ENCODE measurements at regions of chr2 and their contacts with region 1.

Region 1: DNA sequence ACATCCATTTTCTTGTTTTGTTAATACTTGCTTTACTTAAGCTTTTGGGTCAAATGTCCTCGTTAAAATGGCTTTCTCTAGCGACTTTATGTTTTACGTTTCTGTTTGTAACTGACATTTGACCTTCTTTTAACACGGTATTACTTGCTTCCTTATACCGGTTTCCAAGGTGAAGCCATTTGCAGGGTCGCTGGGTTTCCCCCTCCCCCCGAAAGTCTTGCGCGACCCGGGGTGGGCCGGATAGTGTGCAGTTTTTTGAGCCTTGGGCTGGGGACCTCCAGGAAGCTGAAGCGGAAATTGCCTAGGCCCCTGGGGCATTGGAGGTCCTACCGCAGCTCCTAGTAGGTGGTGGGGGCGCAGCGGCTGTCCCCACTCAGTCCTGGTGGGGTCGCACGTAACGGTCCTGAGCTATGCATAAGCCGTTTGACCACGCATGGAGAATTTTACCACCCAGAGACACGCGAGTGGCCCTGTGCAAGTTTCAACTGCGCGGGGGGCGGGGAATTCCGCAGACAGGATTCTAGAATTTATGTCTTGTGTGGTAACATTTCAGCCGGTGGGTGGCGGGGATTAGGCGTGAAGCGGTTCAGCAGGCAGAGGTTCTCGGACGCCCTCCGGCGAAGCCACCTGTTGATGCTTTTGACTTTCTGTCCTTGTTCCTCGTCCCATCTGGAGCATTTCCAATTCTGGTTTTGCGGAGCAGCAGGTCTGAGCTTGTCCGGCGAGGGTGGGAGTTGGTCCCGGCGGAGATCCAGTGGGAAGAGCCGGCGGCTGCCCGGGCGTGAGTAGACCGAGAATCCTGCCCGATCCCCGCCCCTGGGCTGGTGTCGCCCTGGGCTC is 2.4 kb downstream of the CFLAR start:
- DNase-seq: peak; percentile 82
- ATAC-seq: peak; percentile 28
- H3K4me3 Mint-ChIP-seq: peak overlapping the region; percentile 89
- H3K27ac Mint-ChIP-seq: peak overlapping the region; percentile 99
- H3K4me1 Mint-ChIP-seq: peaks cover 45% of the 10 kb centered on the region
- H3K27me3 Mint-ChIP-seq: no peaks in the 10 kb centered on the region

Region 2: GRCh38 chr2:200888704-200889625 is 229.4 kb before region 1 on chr2 and contains the starts of genes NIF3L1 and PPIL3:
- POLR2A ChIA-PET with region 1: interaction called, 27 read pairs
- DNase-seq: peak; percentile 94
- ATAC-seq: peak; percentile 79
- H3K4me3 Mint-ChIP-seq: peak within 1 kb of the TSS; percentile 96
- H3K27ac Mint-ChIP-seq: peak within 1 kb of the TSS; percentile 99
- H3K4me1 Mint-ChIP-seq: peaks cover 35% of the 10 kb centered on the region
- H3K27me3 Mint-ChIP-seq: no peaks in the 10 kb centered on the region
- total RNA-seq, gene NIF3L1: 36.9 to 37.7 TPM
- total RNA-seq, gene PPIL3: 44.2 to 45.2 TPM

Region 3: GRCh38 chr2:200963124-200963917 is 155.0 kb before region 1 on chr2 and contains the start of gene ORC2:
- POLR2A ChIA-PET with region 1: interaction called, 17 read pairs
- DNase-seq: peak; percentile 96
- ATAC-seq: peak; percentile 93
- H3K4me3 Mint-ChIP-seq: peak within 1 kb of the TSS; percentile 96
- H3K27ac Mint-ChIP-seq: peak within 1 kb of the TSS; percentile 97
- H3K4me1 Mint-ChIP-seq: peaks cover 43% of the 10 kb centered on the region
- H3K27me3 Mint-ChIP-seq: no peaks in the 10 kb centered on the region
- total RNA-seq, gene ORC2: 52.0 to 55.0 TPM

Region 4: DNA sequence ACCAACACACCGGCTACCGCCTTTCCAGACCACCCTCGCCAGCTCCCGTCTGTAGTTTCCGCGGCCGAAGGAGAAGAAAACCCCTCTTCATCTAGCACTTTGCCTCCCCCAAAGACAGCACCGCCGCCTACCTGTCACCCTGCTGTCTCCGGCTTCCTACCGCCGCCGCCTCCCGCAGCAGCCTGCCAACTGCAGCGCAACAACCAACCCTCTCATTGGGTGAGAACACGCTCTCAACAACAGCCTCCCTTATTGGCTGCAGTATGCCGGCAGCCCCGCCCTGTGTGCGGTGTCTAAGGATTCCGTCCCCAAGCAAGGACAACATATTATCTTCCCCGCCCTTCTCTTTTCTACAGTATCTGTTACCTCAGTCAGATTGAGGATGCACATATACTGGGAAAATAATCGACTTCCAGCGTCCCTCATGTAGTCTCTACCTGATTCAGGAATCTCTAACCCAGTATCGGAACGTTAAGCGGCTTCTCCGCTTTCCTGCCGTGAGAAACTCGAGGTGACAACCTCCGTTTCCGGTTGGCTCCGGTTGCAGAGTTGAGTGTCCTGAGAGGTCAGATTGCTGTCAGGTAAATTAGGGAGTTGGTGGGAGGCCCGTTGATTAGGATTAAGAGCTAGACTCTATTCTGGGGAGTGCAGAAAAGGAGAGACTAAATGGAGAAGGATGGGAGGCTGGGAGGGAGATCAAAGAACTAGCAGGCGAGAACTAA is 46.7 kb before region 1 on chr2 and contains the starts of genes HYCC2 and NDUFB3:
- POLR2A ChIA-PET with region 1: interaction called, 35 read pairs
- DNase-seq: peak; percentile 88
- ATAC-seq: peak; percentile 97
- H3K4me3 Mint-ChIP-seq: peak within 1 kb of the TSS; percentile 90
- H3K27ac Mint-ChIP-seq: peak within 1 kb of the TSS; percentile 87
- H3K4me1 Mint-ChIP-seq: peaks cover 32% of the 10 kb centered on the region
- H3K27me3 Mint-ChIP-seq: no peaks in the 10 kb centered on the region
- total RNA-seq, gene HYCC2: 37.0 to 40.5 TPM
- total RNA-seq, gene NDUFB3: 115 to 116 TPM

Region 5: DNA sequence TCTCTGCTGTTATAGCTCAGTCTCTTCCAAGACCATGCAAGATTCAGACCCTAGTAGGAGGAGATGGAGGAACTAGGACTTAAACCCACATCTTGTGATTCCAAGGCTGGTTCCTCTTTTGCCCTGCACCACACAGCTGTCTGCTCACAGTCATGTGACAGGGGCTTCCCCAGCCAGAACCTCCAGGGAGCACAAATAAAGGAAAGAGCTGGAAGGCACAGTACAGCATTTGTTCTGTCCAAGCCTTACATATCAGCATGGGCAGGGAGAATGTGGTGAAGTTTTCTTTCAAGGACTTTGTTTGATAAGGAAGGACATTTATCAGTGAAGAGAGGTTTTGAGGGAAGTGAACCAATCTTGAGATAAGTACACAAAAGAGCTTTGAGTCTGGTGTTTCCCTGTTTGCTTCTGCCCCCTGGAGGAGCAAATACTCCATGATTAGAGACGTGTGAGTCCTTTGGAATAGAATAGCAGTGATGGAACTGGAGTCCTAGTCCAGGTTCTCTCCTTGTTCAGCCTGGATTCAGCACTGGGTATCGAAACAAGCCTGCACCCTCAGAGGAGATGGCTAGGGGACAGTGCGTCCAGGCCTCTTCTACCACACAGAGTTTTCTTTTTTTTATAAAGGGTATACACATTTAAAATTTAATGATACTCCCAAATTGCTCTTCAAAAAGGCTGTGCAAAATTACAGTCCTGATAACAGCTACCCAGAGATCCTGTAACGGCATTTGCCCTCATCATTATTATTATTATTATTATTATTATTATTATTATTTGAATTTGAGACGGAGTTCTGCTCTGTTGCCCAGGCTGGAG is 40.0 kb after region 1 on chr2:
- POLR2A ChIA-PET with region 1: interaction called, 46 read pairs
- DNase-seq: no peak
- ATAC-seq: peak; percentile 87
- H3K4me3 Mint-ChIP-seq: peak overlapping the region; percentile 17
- H3K27ac Mint-ChIP-seq: peak overlapping the region; percentile 85
- H3K4me1 Mint-ChIP-seq: peaks cover 9% of the 10 kb centered on the region
- H3K27me3 Mint-ChIP-seq: no peaks in the 10 kb centered on the region

Region 6: DNA sequence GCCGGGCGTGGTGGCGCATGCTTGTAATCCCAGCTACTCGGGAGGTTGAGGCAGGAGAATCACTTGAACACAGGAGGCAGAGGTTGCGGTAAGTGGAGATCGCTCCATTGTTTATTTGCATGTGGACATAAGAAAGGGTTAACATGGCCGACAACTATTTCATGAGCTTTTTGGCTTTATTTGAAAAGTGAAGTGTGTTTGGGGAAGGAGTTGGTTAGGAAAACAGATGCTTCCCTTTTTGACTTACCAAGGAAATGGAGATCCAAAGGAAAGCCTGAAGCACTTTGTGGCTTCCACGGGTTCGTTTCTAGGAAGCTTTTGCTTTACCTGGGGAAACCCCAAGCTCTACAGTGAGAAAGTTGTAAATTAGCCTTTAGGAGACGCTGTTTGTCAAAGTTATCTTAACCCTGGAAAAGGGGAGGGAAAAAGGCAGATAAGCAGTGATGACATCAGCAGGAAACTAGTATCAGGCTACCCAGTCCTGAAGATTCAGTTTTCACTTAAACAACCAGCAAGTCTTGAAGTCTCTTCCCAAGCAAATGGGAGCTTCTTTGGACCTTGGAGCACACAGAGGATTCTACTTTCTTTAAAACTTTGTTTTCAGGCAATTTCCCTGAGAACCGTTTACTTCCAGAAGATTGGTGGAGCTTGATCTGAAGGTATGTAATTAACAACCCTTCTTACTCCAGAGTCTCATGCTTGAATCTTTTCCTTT is 64.5 kb after region 1 on chr2 and contains the start of gene CASP10:
- POLR2A ChIA-PET with region 1: interaction called, 26 read pairs
- DNase-seq: no peak
- ATAC-seq: peak; percentile 78
- H3K4me3 Mint-ChIP-seq: peak within 1 kb of the TSS; percentile 96
- H3K27ac Mint-ChIP-seq: peak within 1 kb of the TSS; percentile 92
- H3K4me1 Mint-ChIP-seq: peaks cover 41% of the 10 kb centered on the region
- H3K27me3 Mint-ChIP-seq: no peaks in the 10 kb centered on the region
- total RNA-seq, gene CASP10: 45.2 to 46.1 TPM

Region 7: DNA sequence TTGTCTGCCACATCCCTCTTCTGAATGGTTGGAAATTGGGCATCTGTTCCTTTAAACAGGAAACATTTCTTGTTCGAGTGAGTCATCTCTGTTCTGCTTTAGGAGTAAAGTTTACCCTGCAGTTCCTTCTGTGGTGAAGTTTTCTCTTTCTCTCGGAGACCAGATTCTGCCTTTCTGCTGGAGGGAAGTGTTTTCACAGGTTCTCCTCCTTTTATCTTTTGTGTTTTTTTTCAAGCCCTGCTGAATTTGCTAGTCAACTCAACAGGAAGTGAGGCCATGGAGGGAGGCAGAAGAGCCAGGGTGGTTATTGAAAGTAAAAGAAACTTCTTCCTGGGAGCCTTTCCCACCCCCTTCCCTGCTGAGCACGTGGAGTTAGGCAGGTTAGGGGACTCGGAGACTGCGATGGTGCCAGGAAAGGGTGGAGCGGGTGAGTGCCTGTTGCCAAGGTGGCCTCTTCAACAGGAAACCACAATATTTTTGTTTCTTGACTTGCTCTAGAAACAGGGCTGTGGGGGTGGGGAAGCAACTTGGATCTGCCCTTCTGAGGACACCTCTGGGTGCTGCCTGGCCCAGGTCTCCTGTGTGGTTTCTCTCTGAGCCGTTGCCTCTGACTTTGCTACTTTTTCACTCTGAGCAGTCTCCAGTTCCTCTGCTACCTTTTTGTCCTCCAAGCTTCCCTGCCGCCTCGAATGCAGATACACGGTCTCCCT is 139.8 kb after region 1 on chr2:
- POLR2A ChIA-PET with region 1: interaction called, 15 read pairs
- DNase-seq: peak; percentile 80
- ATAC-seq: peak; percentile 70
- H3K4me3 Mint-ChIP-seq: peak overlapping the region; percentile 83
- H3K27ac Mint-ChIP-seq: peak overlapping the region; percentile 98
- H3K4me1 Mint-ChIP-seq: peaks cover 60% of the 10 kb centered on the region
- H3K27me3 Mint-ChIP-seq: no peaks in the 10 kb centered on the region